HEK293 (cell line): ENCODE measurements at regions of chr9 and their contacts with region 1.

Region 1: DNA sequence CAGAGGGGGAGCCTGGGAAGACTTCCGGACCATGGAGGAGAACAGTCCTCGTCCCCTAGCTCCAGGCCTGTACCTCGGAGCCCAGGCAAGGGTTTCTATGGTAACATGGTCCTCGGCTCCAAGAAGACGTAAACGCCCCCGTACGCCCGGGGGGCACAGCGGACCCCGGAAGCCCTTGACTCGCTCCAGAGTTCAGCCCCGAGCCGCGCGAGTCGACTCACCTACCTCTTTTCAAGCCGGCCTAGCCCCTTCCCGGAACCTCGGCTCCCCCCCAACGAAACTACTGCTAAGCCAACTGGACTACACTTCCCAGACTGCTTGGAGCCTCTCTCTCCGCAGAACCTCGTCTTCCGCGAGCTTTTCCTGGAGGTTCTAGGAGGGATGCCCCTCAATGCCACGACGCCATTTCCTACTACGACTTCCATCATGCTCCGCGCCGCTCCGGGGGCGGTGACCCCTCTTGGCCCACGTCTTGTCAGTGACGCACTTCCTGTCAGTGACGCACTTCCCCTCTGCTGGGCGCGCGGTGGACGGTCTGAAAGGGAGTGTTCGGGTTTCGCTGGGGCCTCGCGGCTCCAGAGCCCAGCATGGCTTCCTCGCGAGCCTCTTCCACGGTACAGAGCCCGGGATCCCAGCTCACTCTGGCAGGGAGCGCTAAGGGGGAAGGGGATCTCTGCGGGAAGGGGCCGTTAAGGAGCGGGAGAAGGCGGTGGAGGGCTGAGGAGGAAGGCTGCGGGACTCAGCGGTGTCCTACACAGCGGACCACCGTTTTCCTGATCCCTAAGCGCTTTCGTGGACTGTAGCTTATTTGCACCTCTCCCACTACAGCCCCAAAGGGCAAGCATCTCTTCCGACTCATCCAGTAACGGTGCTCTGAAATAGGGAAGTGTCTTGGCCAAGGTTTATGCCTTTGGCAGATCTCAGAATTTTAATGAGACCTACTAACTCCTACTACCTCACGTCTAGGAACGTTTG is at the starts of genes CDC26 and PRPF4:
- H3K4me3 ChIP-seq: peak within 1 kb of the TSS; percentile 85
- H3K27ac ChIP-seq: peak within 1 kb of the TSS; percentile 49
- H3K4me1 ChIP-seq: 0 out of 2 replicates have a peak, but pooled peaks cover 3% of the 10 kb centered on the region
- CTCF ChIP-seq: no peak

Region 2: DNA sequence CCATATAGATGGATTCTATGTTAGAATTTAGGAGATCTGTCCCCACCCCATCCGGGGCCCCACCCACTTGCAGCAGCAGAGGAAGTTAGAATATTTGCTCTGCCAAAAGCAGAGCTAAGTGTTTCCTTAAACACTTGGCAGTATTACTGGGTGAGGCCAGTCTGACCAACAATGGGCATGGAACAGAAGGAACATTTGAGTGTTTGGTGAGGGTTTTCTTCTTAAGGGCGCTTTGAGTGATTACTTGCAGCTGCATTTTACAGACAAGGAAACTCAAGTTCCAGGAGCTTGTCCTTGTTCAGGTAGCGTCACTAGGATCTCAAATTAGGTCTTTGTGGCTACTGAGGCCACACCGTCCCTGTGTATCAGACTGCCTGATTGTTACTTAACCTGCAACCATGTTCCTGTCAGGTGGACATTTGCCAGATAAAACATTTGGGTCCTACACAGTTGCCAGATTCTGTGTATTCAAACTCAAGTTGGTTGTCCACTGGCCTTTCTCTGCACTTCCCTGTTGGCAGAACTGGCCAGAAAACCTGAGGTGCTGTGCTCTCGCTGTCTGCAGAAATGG is 444.1 kb before region 1 on chr9:
- CTCF ChIA-PET with region 1: no interaction called
- POLR2A ChIA-PET with region 1: interaction called, 12 read pairs
- H3K4me3 ChIP-seq: no peak overlapping the region
- H3K27ac ChIP-seq: no peak overlapping the region
- H3K4me1 ChIP-seq: no peaks in the 10 kb centered on the region
- CTCF ChIP-seq: no peak

Region 3: DNA sequence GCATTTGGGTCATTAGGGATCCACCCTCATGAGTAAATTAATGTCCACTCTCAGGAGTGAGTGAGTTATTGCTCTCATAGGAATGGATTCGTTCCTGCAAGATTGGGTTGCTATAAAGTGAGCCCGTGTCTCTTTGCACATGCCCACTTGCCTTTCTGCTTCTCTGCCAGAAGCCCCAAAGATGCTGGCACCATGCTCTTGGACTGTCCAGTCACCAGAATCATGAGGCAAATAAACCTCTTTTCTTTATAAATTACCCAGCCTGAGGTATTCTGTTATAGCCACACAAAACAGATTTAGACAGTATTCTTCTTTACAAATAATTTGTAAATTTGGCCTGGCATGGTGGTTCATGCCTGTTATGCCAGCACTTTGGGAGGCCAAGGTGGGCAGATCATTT is 24.6 kb before region 1 on chr9:
- CTCF ChIA-PET with region 1: no interaction called
- POLR2A ChIA-PET with region 1: no interaction called
- H3K4me3 ChIP-seq: no peak overlapping the region
- H3K27ac ChIP-seq: no peak overlapping the region
- H3K4me1 ChIP-seq: no peaks in the 10 kb centered on the region
- CTCF ChIP-seq: no peak

Region 4: GRCh38 chr9:113289091-113289490 is 13.6 kb after region 1 on chr9:
- CTCF ChIA-PET with region 1: interaction called, 11 read pairs
- POLR2A ChIA-PET with region 1: interaction called, 6 read pairs
- H3K4me3 ChIP-seq: no peak overlapping the region
- H3K27ac ChIP-seq: no peak overlapping the region
- H3K4me1 ChIP-seq: no peaks in the 10 kb centered on the region
- CTCF ChIP-seq: no peak

Region 5: DNA sequence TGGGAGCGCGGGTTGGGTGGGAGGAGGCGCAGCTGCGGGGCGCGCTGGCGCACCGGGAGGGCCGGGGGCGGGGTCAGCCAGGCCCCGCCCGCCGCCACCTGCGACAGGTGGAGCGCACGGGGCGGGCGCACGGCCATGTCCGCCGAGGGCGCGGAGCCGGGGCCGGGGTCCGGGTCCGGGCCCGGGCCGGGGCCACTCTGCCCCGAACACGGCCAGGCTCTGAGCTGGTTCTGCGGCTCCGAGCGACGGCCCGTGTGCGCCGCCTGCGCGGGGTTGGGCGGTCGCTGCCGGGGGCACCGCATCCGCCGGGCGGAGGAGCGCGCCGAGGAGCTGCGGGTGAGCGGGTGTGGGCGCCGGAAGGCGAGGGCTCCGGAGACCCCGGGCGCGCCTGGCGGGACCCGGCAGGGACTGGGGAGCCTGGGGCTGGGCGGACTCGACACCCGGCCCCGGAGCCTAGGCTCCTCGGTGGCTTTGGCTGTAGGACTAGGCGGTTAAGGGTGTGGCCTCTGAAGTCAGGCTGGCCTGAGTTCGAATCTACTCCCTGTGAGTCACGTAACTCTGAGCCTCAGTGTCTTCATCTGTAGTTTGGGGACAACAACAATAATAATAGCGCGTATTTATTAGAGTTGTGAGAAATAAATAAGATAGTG is 74.1 kb after region 1 on chr9 and contains the start of gene BSPRY:
- CTCF ChIA-PET with region 1: interaction called, 6 read pairs
- POLR2A ChIA-PET with region 1: interaction called, 12 read pairs
- H3K4me3 ChIP-seq: peak within 1 kb of the TSS; percentile 43
- H3K27ac ChIP-seq: no peak within 1 kb of the TSS
- H3K4me1 ChIP-seq: peaks cover 7% of the 10 kb centered on the region; the same call in 1 of the 2 replicates
- CTCF ChIP-seq: no peak

Region 6: GRCh38 chr9:113401027-113401792 is 125.8 kb after region 1 on chr9 and contains the start of gene ALAD:
- CTCF ChIA-PET with region 1: interaction called, 26 read pairs
- POLR2A ChIA-PET with region 1: interaction called, 8 read pairs
- H3K4me3 ChIP-seq: peak within 1 kb of the TSS; percentile 88
- H3K27ac ChIP-seq: no peak within 1 kb of the TSS; the same call in 1 of the 2 replicates
- H3K4me1 ChIP-seq: peaks cover 2% of the 10 kb centered on the region; the same call in 1 of the 2 replicates
- CTCF ChIP-seq: peak; percentile 91

Region 7: GRCh38 chr9:113446323-113446740 is 170.9 kb after region 1 on chr9:
- CTCF ChIA-PET with region 1: interaction called, 10 read pairs
- POLR2A ChIA-PET with region 1: interaction called, 5 read pairs
- H3K4me3 ChIP-seq: no peak overlapping the region
- H3K27ac ChIP-seq: no peak overlapping the region
- H3K4me1 ChIP-seq: no peaks in the 10 kb centered on the region
- CTCF ChIP-seq: no peak